ENCODE measurements at regions of chr14 and their contacts with region 1.

Region 1: GRCh38 chr14:20530771-20531571 is 25.6 kb downstream of the RNASE10 start:
- DNase-seq: peak; percentile 79 to 83
- H3K4me3 ChIP-seq: no peak overlapping the region
- H3K27ac ChIP-seq: no peak overlapping the region
- H3K4me1 ChIP-seq: no peaks in the 10 kb centered on the region
- H3K27me3 ChIP-seq: peaks cover 0 to 3% of the 10 kb centered on the region in 2 donors
- CTCF ChIP-seq: peak; percentile 56 to 61

Region 2: GRCh38 chr14:20454516-20455354 is 76.2 kb before region 1 on chr14 and contains the starts of genes APEX1 and OSGEP:
- intact Hi-C with region 1: no loop called
- DNase-seq: peak; percentile 99
- H3K4me3 ChIP-seq: peak within 1 kb of the TSS; percentile 71 to 72
- H3K27ac ChIP-seq: peak within 1 kb of the TSS; percentile 84 to 93
- H3K4me1 ChIP-seq: peaks cover 0 to 40% (median 29%) of the 10 kb centered on the region in 4 donors
- H3K27me3 ChIP-seq: no peaks in the 10 kb centered on the region
- CTCF ChIP-seq: no peak

Region 3: GRCh38 chr14:20690848-20691523 is 160.0 kb after region 1 on chr14:
- intact Hi-C with region 1: loop called (anchors 5 kb)
- DNase-seq: peak in 1 of 2 donors; percentile 43
- H3K4me3 ChIP-seq: no peak overlapping the region
- H3K27ac ChIP-seq: no peak overlapping the region
- H3K4me1 ChIP-seq: peaks cover 0 to 33% (median 19%) of the 10 kb centered on the region in 4 donors
- H3K27me3 ChIP-seq: no peaks in the 10 kb centered on the region
- CTCF ChIP-seq: peak; percentile 77 to 81